Activated CD4-positive, alpha-beta T cell treated with anti-CD3 and anti-CD28 coated beads, Interleukin-2, amount 10 ng/mL, durations not matched to agents 7 days and 5 days (primary cell): ENCODE measurements at regions of chr3 and their contacts with region 1.

Region 1: GRCh38 chr3:42600111-42600988 is at the start of gene NKTR:
- DNase-seq: peak; percentile 100
- H3K4me3 Mint-ChIP-seq: peak within 1 kb of the TSS; percentile 91
- H3K27ac Mint-ChIP-seq: peak within 1 kb of the TSS; percentile 98
- H3K4me1 Mint-ChIP-seq: peaks cover 31% of the 10 kb centered on the region
- H3K27me3 Mint-ChIP-seq: no peaks in the 10 kb centered on the region
- total RNA-seq, gene NKTR: 96.4 to 106 TPM

Region 2: GRCh38 chr3:42189736-42190135 is 410.6 kb before region 1 on chr3:
- CTCF ChIA-PET with region 1: no interaction called
- POLR2A ChIA-PET with region 1: interaction called, 10 read pairs
- DNase-seq: no peak
- H3K4me3 Mint-ChIP-seq: no peak overlapping the region
- H3K27ac Mint-ChIP-seq: no peak overlapping the region
- H3K4me1 Mint-ChIP-seq: peaks cover 42% of the 10 kb centered on the region
- H3K27me3 Mint-ChIP-seq: no peaks in the 10 kb centered on the region

Region 3: GRCh38 chr3:42569593-42570142 is 30.7 kb before region 1 on chr3:
- CTCF ChIA-PET with region 1: no interaction called
- POLR2A ChIA-PET with region 1: no interaction called
- DNase-seq: no peak
- H3K4me3 Mint-ChIP-seq: no peak overlapping the region
- H3K27ac Mint-ChIP-seq: no peak overlapping the region
- H3K4me1 Mint-ChIP-seq: peaks cover 24% of the 10 kb centered on the region
- H3K27me3 Mint-ChIP-seq: no peaks in the 10 kb centered on the region

Region 4: DNA sequence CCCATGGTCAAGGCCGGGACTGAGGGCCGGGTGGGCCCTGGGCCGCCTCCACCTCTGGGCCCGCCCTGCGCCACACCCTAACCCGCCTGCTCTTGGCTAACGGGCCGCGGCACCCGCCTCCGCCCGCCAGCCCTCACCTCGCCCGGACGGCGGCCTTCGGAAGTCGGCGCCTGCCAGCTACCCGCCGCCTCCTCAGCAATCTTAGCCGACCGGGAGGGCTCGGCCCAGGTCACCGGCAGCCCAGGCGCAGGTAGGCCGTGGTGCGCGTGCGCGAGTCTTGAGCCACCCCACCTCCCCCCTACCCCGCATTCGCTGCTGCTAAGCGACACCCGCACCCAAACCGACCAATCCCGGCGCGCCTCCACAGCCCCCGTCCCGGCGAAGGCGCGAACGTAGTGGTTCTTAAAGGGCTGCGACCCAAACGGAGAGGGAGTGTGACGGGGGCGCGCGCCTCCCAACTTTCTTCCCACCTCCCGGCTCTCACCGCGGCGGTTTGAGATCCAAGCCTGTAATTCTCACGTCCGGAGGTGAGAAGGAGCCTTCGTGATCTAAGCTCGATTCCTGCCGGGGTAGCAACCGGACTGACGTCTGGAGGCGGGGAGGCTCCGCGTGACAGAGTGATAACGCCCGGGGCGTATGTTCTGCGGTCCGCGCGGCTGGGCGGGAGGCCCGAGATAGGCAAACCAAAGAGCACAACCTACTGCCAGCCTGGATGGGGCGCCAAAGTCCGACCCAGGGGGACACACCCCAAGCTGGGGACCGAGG is 18.5 kb before region 1 on chr3 and contains the start of gene SEC22C:
- CTCF ChIA-PET with region 1: interaction called, 14 read pairs
- POLR2A ChIA-PET with region 1: interaction called, 4 read pairs
- DNase-seq: peak; percentile 96
- H3K4me3 Mint-ChIP-seq: peak within 1 kb of the TSS; percentile 84
- H3K27ac Mint-ChIP-seq: peak within 1 kb of the TSS; percentile 91
- H3K4me1 Mint-ChIP-seq: peaks cover 65% of the 10 kb centered on the region
- H3K27me3 Mint-ChIP-seq: no peaks in the 10 kb centered on the region
- total RNA-seq, gene SEC22C: 56.0 to 58.9 TPM

Region 5: DNA sequence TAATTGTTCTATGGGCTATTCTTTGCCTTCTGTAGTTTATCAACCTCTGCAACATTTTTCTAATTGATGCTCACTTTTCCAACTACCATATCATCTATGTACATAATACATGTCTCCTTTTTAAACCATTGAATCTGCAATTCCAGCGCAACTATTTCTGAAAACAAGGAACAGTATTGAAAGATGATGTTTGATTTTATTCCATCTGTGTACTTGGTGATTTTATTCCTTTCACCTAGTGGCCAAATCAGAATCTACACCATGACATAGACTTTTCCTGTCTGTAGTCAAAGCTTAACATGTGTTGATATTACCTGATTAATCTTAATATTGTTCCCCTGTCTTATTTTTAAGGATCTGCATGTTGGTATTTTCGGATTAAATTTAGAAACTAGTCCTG is 13.1 kb after region 1 on chr3:
- CTCF ChIA-PET with region 1: interaction called, 13 read pairs
- POLR2A ChIA-PET with region 1: interaction called, 4 read pairs
- DNase-seq: no peak
- H3K4me3 Mint-ChIP-seq: no peak overlapping the region
- H3K27ac Mint-ChIP-seq: no peak overlapping the region
- H3K4me1 Mint-ChIP-seq: peaks cover 53% of the 10 kb centered on the region
- H3K27me3 Mint-ChIP-seq: no peaks in the 10 kb centered on the region